Left colon (tissue), 2 donors: ENCODE measurements at regions of chr20 and their contacts with region 1.

Region 1: GRCh38 chr20:24992487-24993205 is at the start of gene APMAP:
- DNase-seq: peak; percentile 95 to 99
- ATAC-seq: peak; percentile 97
- total RNA-seq, gene APMAP: 44.5 to 53.4 TPM

Region 2: DNA sequence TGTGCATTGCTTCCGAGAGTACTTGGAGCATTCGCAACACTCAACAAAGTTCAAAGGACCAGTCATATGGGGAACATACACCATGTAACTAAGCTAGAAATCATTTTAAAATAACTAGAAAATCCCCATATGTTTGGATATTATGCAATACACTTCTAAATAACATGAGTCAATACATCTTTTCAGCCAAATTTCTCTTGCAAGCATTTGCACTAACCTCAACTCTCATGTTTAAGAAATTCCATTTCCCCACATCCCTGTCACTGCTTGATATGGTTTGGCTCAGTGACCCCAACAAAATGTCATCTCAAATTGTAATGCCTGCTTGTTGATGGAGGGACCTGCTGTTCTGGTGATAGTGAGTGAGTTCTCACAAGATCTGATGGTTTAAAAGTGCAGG is 129.3 kb before region 1 on chr20:
- intact Hi-C with region 1: no loop called
- DNase-seq: no peak
- ATAC-seq: no peak

Region 3: GRCh38 chr20:24877652-24878051 is 115.0 kb before region 1 on chr20:
- intact Hi-C with region 1: no loop called
- DNase-seq: no peak
- ATAC-seq: no peak

Region 4: DNA sequence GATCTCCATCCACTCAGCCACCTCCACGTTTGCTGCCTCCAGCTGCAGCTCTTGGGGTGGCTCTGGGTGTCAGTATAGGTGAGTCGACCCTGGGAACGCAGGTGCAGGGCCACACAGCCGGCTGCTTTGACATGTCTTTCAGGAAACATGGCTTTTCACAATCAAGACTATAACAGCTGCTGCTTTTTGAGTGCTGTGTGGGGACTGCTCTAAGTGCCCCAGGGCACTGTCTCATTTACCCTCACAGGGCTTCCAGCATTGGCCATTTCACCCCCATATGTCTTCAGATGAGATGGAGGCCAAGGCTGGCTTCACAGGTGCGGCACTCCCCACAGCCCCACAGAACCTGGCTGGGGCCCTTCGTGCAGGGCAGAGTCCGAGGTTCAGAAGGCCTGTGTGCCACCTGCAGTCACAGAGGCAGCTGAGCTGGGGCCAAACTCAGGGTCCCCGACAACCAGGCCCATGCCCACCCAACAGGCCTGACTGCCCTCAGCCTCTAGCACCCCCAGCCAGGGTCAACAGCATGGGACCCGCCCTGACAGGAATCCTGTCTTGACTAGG is 58.5 kb before region 1 on chr20:
- intact Hi-C with region 1: no loop called
- DNase-seq: no peak
- ATAC-seq: peak; percentile 74

Region 5: DNA sequence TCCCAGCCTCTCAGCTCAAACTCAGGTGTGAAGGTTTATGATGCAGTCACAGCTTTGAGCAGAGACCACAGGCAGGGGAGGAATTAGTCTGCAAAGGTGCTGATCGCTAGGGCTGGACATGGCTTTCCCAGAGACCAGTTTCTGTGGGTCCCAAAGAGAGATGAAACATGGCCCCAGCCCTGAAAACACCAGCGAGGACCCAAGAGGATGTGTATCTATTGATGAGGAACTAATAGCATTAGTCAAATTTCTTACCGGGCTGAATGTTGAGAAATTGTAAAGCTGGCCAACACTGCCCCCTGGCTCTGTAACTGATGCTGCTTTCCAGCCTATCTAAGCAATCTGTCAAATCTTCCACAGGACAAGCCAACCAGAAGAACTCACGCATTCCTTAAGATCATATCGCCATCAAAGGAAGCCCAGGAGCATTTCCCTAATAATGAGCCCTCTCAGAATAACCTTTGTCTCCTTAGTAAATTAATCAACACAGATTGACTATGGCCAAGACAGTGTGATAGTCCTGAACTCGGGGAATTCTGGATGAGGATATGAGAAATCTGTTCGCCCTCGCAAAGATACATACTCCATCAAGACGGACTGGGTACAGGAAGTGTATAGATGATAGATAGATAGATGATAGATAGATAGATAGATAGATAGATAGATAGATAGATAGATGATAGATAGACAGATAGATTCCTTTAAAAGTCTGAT is 73.1 kb after region 1 on chr20:
- intact Hi-C with region 1: loop called (anchors 2 to 5 kb)
- DNase-seq: peak; percentile 44 to 80
- ATAC-seq: peak; percentile 77

Region 6: DNA sequence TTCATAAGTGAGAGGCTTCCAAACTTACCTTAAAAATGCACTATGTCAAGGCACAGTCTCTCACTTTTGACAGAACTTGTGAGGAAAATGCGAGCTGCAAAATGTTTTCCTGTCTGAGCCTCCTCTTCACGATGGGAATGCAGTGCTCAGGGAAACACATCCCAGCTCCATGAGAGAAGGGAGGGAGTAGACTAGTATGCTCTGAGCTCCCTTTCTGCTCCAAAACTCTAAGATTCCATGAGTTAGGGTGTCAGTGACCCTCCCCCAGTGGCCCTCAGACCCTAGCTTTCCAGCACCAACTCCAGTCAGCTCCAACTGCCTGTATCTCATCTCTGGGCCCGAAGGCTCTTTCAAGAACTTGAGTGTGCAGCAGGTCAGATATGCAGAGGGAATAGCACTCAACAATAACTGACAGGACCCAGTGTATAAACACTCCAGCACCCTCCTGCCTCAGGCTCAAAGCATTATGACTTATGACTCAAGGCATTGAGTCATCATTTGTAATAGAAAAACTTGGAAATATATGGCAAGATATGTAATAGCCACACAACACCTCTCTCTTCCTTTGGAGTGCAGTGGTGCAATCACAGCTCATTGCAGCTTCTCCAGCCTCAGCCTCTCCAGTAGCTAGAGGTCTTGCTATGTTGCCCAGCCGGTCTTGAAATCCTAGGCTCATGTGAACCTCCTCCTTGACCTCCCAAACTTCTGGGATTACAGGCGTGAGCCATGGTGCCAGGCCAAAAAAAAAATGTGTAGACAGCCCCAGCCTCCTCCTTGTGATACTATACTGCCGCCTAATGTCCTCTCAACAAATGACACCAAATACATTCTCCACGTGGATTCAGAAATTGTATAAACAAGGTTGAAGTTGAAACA is 186.2 kb after region 1 on chr20:
- intact Hi-C with region 1: loop called (anchors 10 kb)
- DNase-seq: no peak
- ATAC-seq: peak; percentile 85

Region 7: GRCh38 chr20:25407311-25408169 is 414.9 kb after region 1 on chr20 and contains the start of gene GINS1:
- intact Hi-C with region 1: loop called in 1 of 2 experiments (anchors 10 kb)
- DNase-seq: peak; percentile 83 to 86
- ATAC-seq: peak; percentile 97
- total RNA-seq, gene GINS1: 2.7 to 5.0 TPM